PC-3 (cell line): ENCODE measurements at regions of chr12 and their contacts with region 1.

Region 1: GRCh38 chr12:131737142-131737827 is 26.4 kb downstream of the SFSWAP start:
- DNase-seq: peak; percentile 98
- ATAC-seq: peak; percentile 98
- H3K4me3 ChIP-seq: peak overlapping the region; percentile 62
- H3K27ac ChIP-seq: peak overlapping the region; percentile 70
- H3K4me1 ChIP-seq: peaks cover 29% of the 10 kb centered on the region
- H3K27me3 ChIP-seq: no peaks in the 10 kb centered on the region
- CTCF ChIP-seq: no peak

Region 2: GRCh38 chr12:130589540-130590317 is 1147.6 kb before region 1 on chr12:
- CTCF ChIA-PET with region 1: no interaction called
- POLR2A ChIA-PET with region 1: no interaction called
- intact Hi-C with region 1: no loop called
- DNase-seq: no peak
- ATAC-seq: no peak
- H3K4me3 ChIP-seq: no peak overlapping the region
- H3K27ac ChIP-seq: no peak overlapping the region
- H3K4me1 ChIP-seq: no peaks in the 10 kb centered on the region
- H3K27me3 ChIP-seq: no peaks in the 10 kb centered on the region
- CTCF ChIP-seq: no peak

Region 3: GRCh38 chr12:131351319-131352028 is 385.8 kb before region 1 on chr12:
- CTCF ChIA-PET with region 1: no interaction called
- POLR2A ChIA-PET with region 1: no interaction called
- intact Hi-C with region 1: no loop called
- DNase-seq: no peak
- ATAC-seq: no peak
- H3K4me3 ChIP-seq: no peak overlapping the region
- H3K27ac ChIP-seq: no peak overlapping the region
- H3K4me1 ChIP-seq: no peaks in the 10 kb centered on the region
- H3K27me3 ChIP-seq: peaks cover 73% of the 10 kb centered on the region
- CTCF ChIP-seq: no peak

Region 4: GRCh38 chr12:131608740-131609690 is 128.3 kb before region 1 on chr12:
- CTCF ChIA-PET with region 1: no interaction called
- POLR2A ChIA-PET with region 1: no interaction called
- intact Hi-C with region 1: loop called (anchors 5 kb)
- DNase-seq: peak; percentile 68
- ATAC-seq: peak; percentile 94
- H3K4me3 ChIP-seq: no peak overlapping the region
- H3K27ac ChIP-seq: no peak overlapping the region
- H3K4me1 ChIP-seq: no peaks in the 10 kb centered on the region
- H3K27me3 ChIP-seq: peaks cover 79% of the 10 kb centered on the region
- CTCF ChIP-seq: peak; percentile 88

Region 5: GRCh38 chr12:131783915-131784541 is 46.7 kb after region 1 on chr12:
- CTCF ChIA-PET with region 1: no interaction called
- POLR2A ChIA-PET with region 1: no interaction called
- intact Hi-C with region 1: loop called (anchors 5 kb)
- DNase-seq: peak; percentile 84
- ATAC-seq: peak; percentile 86
- H3K4me3 ChIP-seq: peak overlapping the region; percentile 33
- H3K27ac ChIP-seq: peak overlapping the region; percentile 78
- H3K4me1 ChIP-seq: peaks cover 25% of the 10 kb centered on the region
- H3K27me3 ChIP-seq: no peaks in the 10 kb centered on the region
- CTCF ChIP-seq: no peak